ENCODE measurements at regions of chr15 and their contacts with region 1.

Region 1: DNA sequence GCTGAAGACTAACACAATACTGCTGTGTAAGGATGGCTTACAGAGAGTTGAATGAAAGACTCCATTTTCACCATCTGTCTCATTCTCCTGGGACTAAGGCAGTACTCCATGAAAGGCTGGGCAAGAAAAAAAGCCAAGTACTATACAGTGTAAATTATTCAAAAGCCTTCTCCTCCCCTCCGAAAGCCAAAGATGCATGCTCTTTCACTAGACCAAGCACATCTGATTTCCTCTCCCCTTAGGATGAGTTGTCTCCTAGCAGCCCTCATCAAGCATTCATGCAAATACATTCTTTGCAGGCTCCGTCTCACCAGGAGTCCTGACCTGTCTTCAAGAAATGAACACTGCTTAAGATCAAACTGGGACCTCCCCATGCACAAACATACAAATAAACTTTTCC is 133.5 kb upstream of the THBS1 start:
- DNase-seq: no peak
- ATAC-seq: no peak
- H3K4me3 ChIP-seq: no peak overlapping the region
- H3K27ac ChIP-seq: no peak overlapping the region
- H3K4me1 ChIP-seq: no peaks in the 10 kb centered on the region
- H3K27me3 ChIP-seq: no peaks in the 10 kb centered on the region
- CTCF ChIP-seq: no peak

Region 2: GRCh38 chr15:39403674-39404117 is 43.6 kb before region 1 on chr15:
- intact Hi-C with region 1: loop called in 1 of 2 experiments (anchors 2 kb)
- DNase-seq: no peak
- ATAC-seq: no peak
- H3K4me3 ChIP-seq: no peak overlapping the region
- H3K27ac ChIP-seq: no peak overlapping the region
- H3K4me1 ChIP-seq: no peaks in the 10 kb centered on the region
- H3K27me3 ChIP-seq: no peaks in the 10 kb centered on the region
- CTCF ChIP-seq: no peak

Region 3: DNA sequence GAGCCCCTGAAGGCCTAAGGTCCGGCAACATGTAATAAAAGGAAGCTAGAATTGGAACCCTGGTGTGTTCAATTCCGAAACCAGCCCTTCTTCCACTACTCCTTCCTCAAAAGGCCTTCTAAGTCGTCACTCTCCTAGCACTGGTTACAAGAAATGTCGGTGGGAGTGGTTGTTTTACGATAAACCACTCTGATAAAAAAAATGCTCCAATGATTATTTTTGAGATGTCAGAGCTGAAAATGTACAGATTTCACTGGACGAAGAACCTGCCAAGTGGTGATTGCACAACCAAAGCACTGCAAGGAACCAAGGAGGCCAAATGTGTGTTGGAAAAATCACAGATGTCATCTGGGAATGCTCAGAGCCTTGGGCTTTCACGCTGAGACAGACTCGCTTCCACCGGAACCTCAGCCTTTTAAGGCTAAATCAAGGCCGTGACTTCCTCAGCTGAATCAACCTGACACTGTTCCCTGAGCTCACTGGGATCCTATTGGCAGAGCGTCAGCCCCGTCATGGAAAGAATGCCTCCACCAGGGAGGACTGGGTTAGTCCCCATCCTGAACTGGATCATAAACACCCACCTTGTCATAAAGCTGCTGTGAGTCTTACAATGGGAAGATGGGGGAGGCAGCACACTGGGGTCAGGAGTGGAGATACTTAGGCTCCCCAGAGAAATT is 25.4 kb after region 1 on chr15:
- intact Hi-C with region 1: no loop called
- DNase-seq: peak; percentile 78 to 85
- ATAC-seq: peak; percentile 64 to 86 (median 74)
- H3K4me3 ChIP-seq: no peak overlapping the region
- H3K27ac ChIP-seq: peak overlapping the region; percentile 70
- H3K4me1 ChIP-seq: no peaks in the 10 kb centered on the region
- H3K27me3 ChIP-seq: no peaks in the 10 kb centered on the region
- CTCF ChIP-seq: no peak

Region 4: GRCh38 chr15:39488516-39488915 is 41.2 kb after region 1 on chr15:
- intact Hi-C with region 1: no loop called
- DNase-seq: no peak
- ATAC-seq: no peak
- H3K4me3 ChIP-seq: no peak overlapping the region
- H3K27ac ChIP-seq: no peak overlapping the region
- H3K4me1 ChIP-seq: no peaks in the 10 kb centered on the region
- H3K27me3 ChIP-seq: no peaks in the 10 kb centered on the region
- CTCF ChIP-seq: no peak

Measured in psoas muscle (tissue), 8 donors.